ENCODE measurements at regions of chr2 and their contacts with region 1.

Region 1: DNA sequence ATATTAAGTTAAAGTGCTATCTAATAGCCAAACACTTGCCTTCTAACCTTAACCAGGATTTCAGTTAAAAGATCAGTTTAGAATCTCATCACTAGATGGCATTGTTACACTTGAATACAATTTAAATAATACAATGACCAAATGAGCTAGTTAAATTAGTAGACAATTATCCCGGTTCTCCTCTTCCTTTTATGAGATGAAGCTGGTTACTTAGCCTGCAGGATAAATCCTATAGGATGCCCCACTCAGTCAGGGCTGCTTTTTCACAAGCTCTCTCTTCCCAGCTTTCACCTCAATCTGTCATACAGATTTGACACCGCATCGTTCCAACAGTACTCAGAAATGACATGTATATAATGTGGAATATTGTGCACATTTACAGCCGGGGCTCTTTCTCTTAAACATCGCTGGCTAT is 678.8 kb downstream of the KCNJ3 start:
- DNase-seq: no peak
- ATAC-seq: no peak
- H3K4me3 ChIP-seq: no peak overlapping the region
- H3K27ac ChIP-seq: no peak overlapping the region
- H3K4me1 ChIP-seq: no peaks in the 10 kb centered on the region
- H3K27me3 ChIP-seq: peaks cover 0 to 6% (median 0%) of the 10 kb centered on the region in 9 donors
- CTCF ChIP-seq: peak in 9 of 12 donors; percentile 14 to 48 (median 27)
- POLR2A ChIP-seq: no peak

Region 2: GRCh38 chr2:157055660-157056199 is 1678.5 kb after region 1 on chr2:
- intact Hi-C with region 1: loop called in 2 of 10 experiments (anchors 10 kb)
- DNase-seq: no peak
- ATAC-seq: no peak
- H3K4me3 ChIP-seq: peak overlapping the region in 1 of 12 donors; percentile 5
- H3K27ac ChIP-seq: peak overlapping the region in 2 of 12 donors; percentile 33 to 43
- H3K4me1 ChIP-seq: no peaks in the 10 kb centered on the region
- H3K27me3 ChIP-seq: no peaks in the 10 kb centered on the region
- CTCF ChIP-seq: peak in 11 of 12 donors; percentile 18 to 66 (median 42)
- POLR2A ChIP-seq: no peak

Measured in heart left ventricle (tissue), 16 donors.